Left cardiac atrium (tissue), 4 donors: ENCODE measurements at regions of chr10 and their contacts with region 1.

Region 1: GRCh38 chr10:78972947-78973900 is 95.5 kb upstream of the ZMIZ1 start:
- DNase-seq: peak; percentile 88
- ATAC-seq: peak; percentile 70 to 79

Region 2: DNA sequence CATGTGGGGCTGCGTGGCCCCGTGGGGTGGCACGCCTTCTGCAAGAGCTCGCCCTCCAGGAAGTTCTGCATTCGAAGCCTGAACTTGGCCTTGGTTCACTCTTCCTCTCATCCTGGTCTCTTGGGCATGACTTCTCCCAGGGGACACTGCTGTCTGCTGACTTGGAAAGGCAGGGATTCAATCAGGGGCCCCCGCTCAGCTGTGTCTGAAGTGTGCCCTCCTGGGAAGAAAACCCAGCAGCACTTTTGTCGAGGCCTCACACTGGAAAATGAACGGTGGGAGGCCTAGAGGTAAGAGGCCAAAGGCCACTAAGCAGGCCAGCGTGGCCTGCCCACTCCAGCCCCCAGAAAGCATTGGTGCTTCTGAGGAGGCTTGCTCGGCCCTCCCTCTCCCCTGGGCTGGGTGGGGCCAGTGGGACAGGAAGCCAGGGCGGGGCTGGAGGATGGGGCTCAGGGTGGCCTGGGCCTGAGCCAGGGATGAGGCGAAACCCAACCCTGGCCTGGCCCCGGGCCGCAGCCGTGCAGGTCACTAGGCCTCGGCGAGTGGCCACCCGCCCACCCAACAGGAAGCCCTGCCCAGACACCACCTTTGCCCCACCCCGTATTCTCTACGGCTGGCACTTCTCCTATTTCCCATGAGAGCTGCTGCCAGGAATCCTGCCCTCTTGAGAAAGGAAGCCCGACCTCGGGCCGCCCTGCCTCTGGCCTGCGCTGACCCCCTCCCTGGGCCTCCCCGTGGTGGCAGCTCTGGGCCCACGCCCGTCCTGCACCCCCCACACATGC is 176.6 kb after region 1 on chr10:
- intact Hi-C with region 1: loop called in 1 of 2 experiments (anchors 10 kb)
- DNase-seq: peak; percentile 92
- ATAC-seq: peak; percentile 47 to 71